ENCODE measurements at regions of chr4 and their contacts with region 1.

Region 1: DNA sequence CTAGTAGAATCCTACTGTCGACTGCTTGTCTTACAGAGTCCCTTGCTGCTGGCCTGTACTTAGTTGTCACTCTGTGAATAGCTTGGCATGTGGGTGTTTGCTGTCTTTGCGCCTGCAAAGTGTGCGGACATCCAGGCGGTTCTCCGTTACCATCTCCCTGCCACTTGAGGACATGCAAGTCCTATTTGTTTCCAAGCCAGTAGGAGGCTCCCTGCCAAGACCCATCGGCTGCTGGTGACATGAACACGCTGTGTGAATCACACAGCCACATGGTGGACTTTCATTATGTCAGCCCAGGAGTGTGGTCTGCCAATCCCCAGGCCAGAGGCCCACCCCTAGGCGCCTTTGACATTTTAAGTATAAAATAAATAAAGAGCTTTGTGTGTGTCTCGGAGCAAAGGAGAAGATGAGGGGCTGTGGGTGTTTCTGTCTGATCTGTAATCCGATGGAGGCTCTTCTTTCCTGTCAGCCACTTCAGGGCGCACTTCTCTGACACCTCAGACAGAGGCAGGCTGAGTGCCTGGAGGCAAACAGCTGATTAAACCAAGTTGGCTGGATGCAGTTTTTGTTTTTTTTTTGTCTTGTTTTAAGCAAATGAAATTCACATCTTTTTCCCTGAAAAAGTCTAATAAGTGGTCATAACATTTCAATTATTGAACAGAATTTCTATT is 51.5 kb downstream of the ALPK1 start:
- DNase-seq: peak; percentile 73 to 90 (median 79)
- ATAC-seq: peak; percentile 95 to 99 (median 98)
- H3K4me3 ChIP-seq: peak overlapping the region in 5 of 12 donors; percentile 15 to 36 (median 26)
- H3K27ac ChIP-seq: peak overlapping the region in 7 of 12 donors; percentile 6 to 69 (median 48)
- H3K4me1 ChIP-seq: peaks cover 0 to 12% (median 4%) of the 10 kb centered on the region in 12 donors
- H3K27me3 ChIP-seq: no peaks in the 10 kb centered on the region
- CTCF ChIP-seq: peak in 7 of 12 donors; percentile 17 to 43 (median 25)
- POLR2A ChIP-seq: no peak

Region 2: GRCh38 chr4:112370466-112370865 is 21.8 kb after region 1 on chr4:
- intact Hi-C with region 1: loop called in 1 of 10 experiments (anchors 1 kb)
- DNase-seq: no peak
- ATAC-seq: no peak
- H3K4me3 ChIP-seq: no peak overlapping the region
- H3K27ac ChIP-seq: no peak overlapping the region
- H3K4me1 ChIP-seq: no peaks in the 10 kb centered on the region
- H3K27me3 ChIP-seq: no peaks in the 10 kb centered on the region
- CTCF ChIP-seq: no peak
- POLR2A ChIP-seq: no peak

Region 3: GRCh38 chr4:112910109-112910736 is 561.6 kb after region 1 on chr4:
- intact Hi-C with region 1: no loop called
- DNase-seq: no peak
- ATAC-seq: peak in 3 of 4 donors; percentile 25 to 56 (median 39)
- H3K4me3 ChIP-seq: peak overlapping the region in 9 of 12 donors; percentile 22 to 49 (median 35)
- H3K27ac ChIP-seq: peak overlapping the region in 4 of 12 donors; percentile 1 to 32 (median 26)
- H3K4me1 ChIP-seq: peaks cover 0 to 9% (median 4%) of the 10 kb centered on the region in 12 donors
- H3K27me3 ChIP-seq: no peaks in the 10 kb centered on the region
- CTCF ChIP-seq: peak in 5 of 12 donors; percentile 11 to 35 (median 29)
- POLR2A ChIP-seq: no peak

Measured in heart left ventricle (tissue), 16 donors.